ENCODE measurements at regions of chr13 and their contacts with region 1.

Region 1: DNA sequence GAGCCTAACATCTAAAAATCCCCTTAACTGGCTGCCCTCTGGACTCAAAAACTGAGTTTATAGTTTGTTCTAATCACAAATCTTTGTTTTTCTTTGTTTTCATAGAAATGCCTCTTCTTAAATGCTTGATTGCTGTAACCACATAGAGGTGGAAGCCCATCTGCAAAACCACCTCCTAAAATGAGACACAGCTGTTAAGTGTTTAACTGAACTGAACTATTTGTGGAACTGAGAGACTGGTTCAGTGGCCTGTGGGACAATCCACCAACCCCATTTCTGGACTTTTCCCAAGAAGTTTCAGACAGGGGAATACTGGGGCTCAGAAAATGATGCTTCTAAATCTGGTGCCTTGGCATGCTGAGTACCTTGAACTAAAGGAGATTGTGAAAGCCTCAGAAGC is 50.9 kb upstream of the TM9SF2 start:
- DNase-seq: no peak
- H3K4me3 ChIP-seq: no peak overlapping the region
- H3K27ac ChIP-seq: no peak overlapping the region
- H3K4me1 ChIP-seq: no peaks in the 10 kb centered on the region
- H3K27me3 ChIP-seq: no peaks in the 10 kb centered on the region
- CTCF ChIP-seq: no peak

Region 2: GRCh38 chr13:99374994-99375737 is 75.2 kb before region 1 on chr13:
- CTCF ChIA-PET with region 1: no interaction called
- dilution Hi-C with region 1: loop called (anchors 5 kb)
- in situ Hi-C with region 1: no loop called
- intact Hi-C with region 1: no loop called
- DNase-seq: no peak
- H3K4me3 ChIP-seq: no peak overlapping the region
- H3K27ac ChIP-seq: no peak overlapping the region
- H3K4me1 ChIP-seq: no peaks in the 10 kb centered on the region
- H3K27me3 ChIP-seq: no peaks in the 10 kb centered on the region
- CTCF ChIP-seq: no peak

Region 3: GRCh38 chr13:99721606-99722337 is 271.4 kb after region 1 on chr13:
- CTCF ChIA-PET with region 1: no interaction called
- dilution Hi-C with region 1: no loop called
- in situ Hi-C with region 1: no loop called
- intact Hi-C with region 1: no loop called
- DNase-seq: no peak
- H3K4me3 ChIP-seq: no peak overlapping the region
- H3K27ac ChIP-seq: no peak overlapping the region
- H3K4me1 ChIP-seq: no peaks in the 10 kb centered on the region
- H3K27me3 ChIP-seq: no peaks in the 10 kb centered on the region
- CTCF ChIP-seq: no peak

Measured in mammary epithelial cell (primary cell).